ENCODE measurements at regions of chr2 and their contacts with region 1.

Region 1: DNA sequence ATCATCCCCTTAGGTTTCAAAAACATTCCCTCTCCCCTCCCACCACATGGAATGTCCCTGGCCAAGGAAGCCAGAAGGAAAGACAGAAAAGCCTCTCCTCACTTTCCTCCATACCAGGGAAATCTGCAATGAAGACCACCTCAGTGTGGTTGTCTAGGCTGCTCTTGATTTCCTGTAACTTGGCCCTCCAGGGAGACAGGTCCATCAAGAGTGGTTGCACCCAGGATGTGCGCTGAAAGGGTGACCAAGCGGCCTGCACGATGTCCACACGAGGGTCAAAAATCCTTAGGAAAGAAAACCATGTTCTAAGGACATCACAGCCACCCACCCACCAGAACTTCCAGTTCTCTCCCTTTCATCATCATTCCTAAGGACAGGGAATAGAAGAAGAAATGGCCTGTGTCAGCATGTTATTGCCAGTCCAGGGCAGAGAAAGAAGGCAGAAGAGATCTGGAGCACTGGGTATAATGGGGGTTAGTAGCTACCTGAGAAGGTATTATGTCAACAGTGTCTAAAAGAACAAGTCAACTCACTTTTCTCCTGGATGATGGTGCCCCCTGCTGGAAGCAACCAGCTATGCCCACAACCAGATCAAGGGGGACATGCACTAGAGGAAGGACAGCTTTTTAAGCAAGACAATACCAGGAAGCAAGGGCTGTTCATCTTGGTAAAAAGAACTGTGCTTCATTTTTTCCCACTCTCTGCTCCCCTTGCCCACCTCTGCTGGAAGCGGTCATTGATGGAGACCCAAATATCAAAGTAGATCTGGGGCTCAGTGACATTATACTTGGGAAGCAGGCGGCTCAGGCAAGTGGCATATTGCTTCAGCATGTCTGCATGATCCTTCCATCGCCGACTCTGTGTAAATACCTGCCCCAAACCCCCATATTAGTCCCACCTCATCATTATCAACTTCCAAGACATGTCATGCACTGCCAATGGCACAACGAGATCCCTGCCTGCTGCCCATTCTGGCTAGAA is 9.3 kb downstream of the GGCX start:
- DNase-seq: peak; percentile 86 to 90 (median 87)
- H3K4me3 ChIP-seq: no peak overlapping the region
- H3K4me3 Mint-ChIP-seq: no peak overlapping the region
- H3K27ac ChIP-seq: no peak overlapping the region
- H3K27ac Mint-ChIP-seq: peak overlapping the region; percentile 22 to 70 (median 47)
- H3K4me1 ChIP-seq: no peaks in the 10 kb centered on the region
- H3K4me1 Mint-ChIP-seq: peaks cover 0 to 7% (median 4%) of the 10 kb centered on the region in 4 donors
- H3K27me3 ChIP-seq: no peaks in the 10 kb centered on the region
- H3K27me3 Mint-ChIP-seq: no peaks in the 10 kb centered on the region

Region 2: DNA sequence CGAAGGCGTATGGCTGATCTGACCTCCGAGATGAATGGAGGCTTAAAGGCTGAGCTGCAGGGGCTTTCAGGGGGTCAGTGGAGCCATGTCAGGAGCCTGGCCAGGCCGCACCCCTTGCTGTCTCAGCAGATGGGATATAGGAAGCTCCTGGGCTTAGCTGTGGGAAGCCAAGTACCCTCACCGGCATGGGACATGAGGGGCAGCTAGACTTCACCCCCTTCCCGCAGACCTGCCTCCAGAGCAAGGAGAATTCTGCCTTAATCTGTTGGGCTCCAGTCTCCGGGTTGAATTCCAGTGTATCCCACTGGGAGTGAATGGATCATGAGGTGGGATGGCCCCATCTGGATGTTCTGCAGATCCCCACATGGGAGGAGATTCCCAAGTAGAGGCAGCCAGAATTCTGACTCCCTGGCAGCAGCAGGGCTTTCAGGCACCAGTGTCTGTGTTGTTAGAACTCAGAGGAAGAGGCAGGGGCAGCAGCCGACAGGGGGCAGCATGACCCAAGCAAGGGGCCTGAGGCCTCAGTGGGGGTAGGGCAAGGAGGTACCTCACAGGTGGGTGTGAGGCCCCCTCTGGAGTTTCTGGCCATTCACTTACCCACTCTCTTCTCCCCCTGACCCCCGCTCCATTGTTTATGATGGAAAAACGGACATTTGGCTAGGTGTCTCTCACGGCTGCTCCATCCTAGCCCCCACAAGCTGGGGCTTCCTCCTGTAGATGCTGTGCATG is 160.9 kb before region 1 on chr2:
- CTCF ChIA-PET with region 1: interaction called, 147 read pairs
- POLR2A ChIA-PET with region 1: interaction called, 12 read pairs
- intact Hi-C with region 1: loop called (anchors 1 kb)
- DNase-seq: peak; percentile 53 to 67 (median 60)
- H3K4me3 ChIP-seq: no peak overlapping the region
- H3K4me3 Mint-ChIP-seq: no peak overlapping the region
- H3K27ac ChIP-seq: no peak overlapping the region
- H3K27ac Mint-ChIP-seq: peak overlapping the region in 4 of 7 donors; percentile 13 to 86 (median 50)
- H3K4me1 ChIP-seq: peaks cover 15% of the 10 kb centered on the region
- H3K4me1 Mint-ChIP-seq: peaks cover 4 to 9% (median 6%) of the 10 kb centered on the region in 4 donors
- H3K27me3 ChIP-seq: no peaks in the 10 kb centered on the region
- H3K27me3 Mint-ChIP-seq: no peaks in the 10 kb centered on the region

Region 3: DNA sequence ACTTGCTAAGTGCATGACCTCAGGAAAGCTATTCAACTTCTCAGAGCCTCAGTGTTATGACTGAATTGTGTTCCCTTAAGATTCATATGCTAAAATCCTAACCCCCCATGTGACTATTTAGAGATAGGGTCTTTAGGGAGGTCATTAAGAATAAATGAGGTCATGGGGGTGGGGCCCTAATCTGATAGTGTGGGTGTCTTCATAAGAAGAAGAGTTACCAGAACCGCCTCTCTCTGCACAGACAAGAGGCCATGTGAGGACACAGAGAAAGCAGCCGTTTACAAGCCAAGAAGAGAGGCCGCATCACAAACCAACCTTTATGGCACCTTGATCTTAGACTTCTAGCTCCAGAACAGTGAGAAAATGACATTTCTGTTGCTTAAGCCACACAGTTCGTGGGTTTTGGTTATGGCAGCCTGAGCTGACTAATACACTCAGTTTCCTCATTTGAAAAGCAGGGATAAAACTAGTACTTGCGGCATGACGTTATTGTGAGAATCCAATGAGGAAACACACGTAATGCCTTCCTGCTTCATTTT is 123.6 kb before region 1 on chr2:
- CTCF ChIA-PET with region 1: interaction called, 378 read pairs
- POLR2A ChIA-PET with region 1: interaction called, 3 read pairs
- intact Hi-C with region 1: no loop called
- DNase-seq: no peak
- H3K4me3 ChIP-seq: no peak overlapping the region
- H3K4me3 Mint-ChIP-seq: no peak overlapping the region
- H3K27ac ChIP-seq: no peak overlapping the region
- H3K27ac Mint-ChIP-seq: no peak overlapping the region
- H3K4me1 ChIP-seq: no peaks in the 10 kb centered on the region
- H3K4me1 Mint-ChIP-seq: no peaks in the 10 kb centered on the region
- H3K27me3 ChIP-seq: no peaks in the 10 kb centered on the region
- H3K27me3 Mint-ChIP-seq: no peaks in the 10 kb centered on the region

Region 4: DNA sequence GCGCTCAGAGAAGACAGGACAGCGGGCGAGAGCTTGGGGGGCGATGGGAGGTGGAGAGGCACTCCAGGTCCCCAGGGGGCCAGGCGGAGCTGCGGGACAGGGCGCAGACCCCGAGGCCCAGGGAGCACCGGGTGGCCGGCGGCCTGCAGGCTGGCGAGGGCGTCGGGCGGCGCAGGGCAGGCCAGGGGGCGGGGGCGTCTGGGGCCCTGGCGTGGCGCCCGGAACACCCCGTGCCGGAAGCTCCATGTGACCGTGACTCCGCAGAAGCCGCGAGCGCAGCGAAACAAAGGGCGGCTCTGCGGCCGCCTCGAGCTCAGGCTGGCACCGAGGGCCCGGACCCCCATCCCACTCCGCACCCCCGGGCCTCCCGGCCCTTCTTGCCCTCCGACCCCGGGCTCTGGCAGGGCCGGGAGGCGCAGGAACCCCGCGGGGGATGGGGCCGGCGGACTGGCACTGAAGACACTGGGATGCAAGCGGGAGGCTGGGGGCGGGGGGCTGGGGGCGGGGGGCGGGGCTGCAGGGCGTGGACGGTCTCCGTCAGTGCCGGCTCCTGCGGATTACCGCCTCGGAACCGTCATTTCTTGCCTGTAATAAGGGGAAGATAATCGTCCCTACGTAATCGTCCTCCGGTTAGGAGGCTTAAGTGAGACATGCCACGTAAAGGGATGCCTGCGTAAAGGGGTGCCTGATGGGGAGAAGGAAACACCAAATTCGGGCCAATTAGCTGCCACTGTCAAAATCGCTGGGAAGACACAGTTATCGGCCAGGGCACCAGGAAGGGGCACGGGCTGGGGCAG is 114.3 kb before region 1 on chr2:
- CTCF ChIA-PET with region 1: interaction called, 13 read pairs
- POLR2A ChIA-PET with region 1: interaction called, 8 read pairs
- intact Hi-C with region 1: no loop called
- DNase-seq: peak; percentile 77 to 88 (median 81)
- H3K4me3 ChIP-seq: peak overlapping the region; percentile 36 to 52
- H3K4me3 Mint-ChIP-seq: peak overlapping the region; percentile 87 to 95 (median 91)
- H3K27ac ChIP-seq: peak overlapping the region; percentile 75
- H3K27ac Mint-ChIP-seq: peak overlapping the region; percentile 88 to 99 (median 98)
- H3K4me1 ChIP-seq: peaks cover 30% of the 10 kb centered on the region
- H3K4me1 Mint-ChIP-seq: peaks cover 9 to 38% (median 25%) of the 10 kb centered on the region in 4 donors
- H3K27me3 ChIP-seq: no peaks in the 10 kb centered on the region
- H3K27me3 Mint-ChIP-seq: no peaks in the 10 kb centered on the region

Region 5: GRCh38 chr2:85772019-85772745 is 220.2 kb after region 1 on chr2:
- CTCF ChIA-PET with region 1: no interaction called
- POLR2A ChIA-PET with region 1: no interaction called
- intact Hi-C with region 1: no loop called
- DNase-seq: no peak
- H3K4me3 ChIP-seq: no peak overlapping the region
- H3K4me3 Mint-ChIP-seq: no peak overlapping the region
- H3K27ac ChIP-seq: no peak overlapping the region
- H3K27ac Mint-ChIP-seq: no peak overlapping the region
- H3K4me1 ChIP-seq: no peaks in the 10 kb centered on the region
- H3K4me1 Mint-ChIP-seq: no peaks in the 10 kb centered on the region
- H3K27me3 ChIP-seq: no peaks in the 10 kb centered on the region
- H3K27me3 Mint-ChIP-seq: peaks cover 21 to 29% of the 10 kb centered on the region in 2 donors

Region 6: GRCh38 chr2:86097114-86097896 is 545.3 kb after region 1 on chr2:
- CTCF ChIA-PET with region 1: no interaction called
- POLR2A ChIA-PET with region 1: no interaction called
- intact Hi-C with region 1: no loop called
- DNase-seq: no peak
- H3K4me3 ChIP-seq: no peak overlapping the region
- H3K4me3 Mint-ChIP-seq: no peak overlapping the region
- H3K27ac ChIP-seq: no peak overlapping the region
- H3K27ac Mint-ChIP-seq: peak overlapping the region in 3 of 7 donors; percentile 6 to 82 (median 64)
- H3K4me1 ChIP-seq: no peaks in the 10 kb centered on the region
- H3K4me1 Mint-ChIP-seq: peaks cover 12 to 21% (median 16%) of the 10 kb centered on the region in 4 donors
- H3K27me3 ChIP-seq: no peaks in the 10 kb centered on the region
- H3K27me3 Mint-ChIP-seq: no peaks in the 10 kb centered on the region

Measured in CD4-positive, alpha-beta memory T cell (primary cell).